GM12878 (cell line): ENCODE measurements at regions of chr6 and their contacts with region 1.

Region 1: DNA sequence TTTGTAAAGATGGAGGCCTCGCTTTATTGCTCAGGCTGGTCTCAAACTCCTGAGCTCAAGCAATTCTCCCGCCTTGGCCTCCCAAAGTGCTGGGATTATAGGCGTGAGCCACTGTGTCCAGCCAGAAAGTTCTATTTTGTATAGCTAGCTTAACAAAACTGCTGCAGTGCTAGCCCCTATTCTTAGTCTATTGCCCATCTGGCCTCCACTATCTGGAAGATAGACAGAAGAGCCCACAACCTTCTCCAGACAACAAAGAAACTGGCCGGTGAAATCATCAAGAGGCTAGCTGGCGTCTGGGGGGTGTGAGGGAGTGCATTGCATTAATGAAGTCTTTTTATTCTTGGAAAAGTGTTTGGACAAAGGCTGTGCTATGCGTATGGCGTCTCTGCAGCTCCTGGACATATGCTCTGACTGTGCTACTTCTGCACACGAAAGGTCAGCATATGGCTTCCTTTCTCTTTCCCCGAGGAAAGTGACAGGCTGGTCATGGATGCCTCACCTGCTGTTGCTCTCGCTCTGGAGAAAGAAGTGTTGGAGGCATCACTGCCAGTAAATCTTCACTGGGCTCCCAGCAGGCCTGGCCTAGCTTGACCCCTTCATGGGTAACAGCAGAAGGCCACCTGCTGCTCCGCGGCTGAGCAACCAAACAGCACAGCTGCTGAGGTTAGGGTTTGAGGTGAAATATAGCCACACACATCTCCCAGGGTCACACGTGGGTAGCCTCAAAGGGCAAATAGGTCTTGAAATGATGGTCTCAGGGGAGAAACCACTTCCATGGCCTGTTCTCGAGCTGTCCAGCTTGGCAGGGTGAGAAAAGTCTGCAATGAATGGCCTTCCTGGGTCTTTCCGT is 95.1 kb upstream of the IYD start:
- DNase-seq: no peak
- ATAC-seq: peak; percentile 86
- H3K4me3 ChIP-seq: no peak overlapping the region
- H3K27ac ChIP-seq: no peak overlapping the region
- H3K4me1 ChIP-seq: no peaks in the 10 kb centered on the region
- H3K27me3 ChIP-seq: no peaks in the 10 kb centered on the region
- CTCF ChIP-seq: no peak
- EP300 ChIP-seq: no peak; a peak in 1 of 4 replicates
- POLR2A ChIP-seq: no peak
- RAD21 ChIP-seq: no peak

Region 2: GRCh38 chr6:150301846-150302519 is 28.3 kb after region 1 on chr6:
- CTCF ChIA-PET with region 1: no interaction called
- POLR2A ChIA-PET with region 1: no interaction called
- RAD21 ChIA-PET with region 1: no interaction called
- SMC1A ChIA-PET with region 1: interaction called, 3 read pairs
- in situ Hi-C with region 1: no loop called
- intact Hi-C with region 1: loop called (anchors 2 kb)
- DNase-seq: no peak
- ATAC-seq: peak; percentile 93
- H3K4me3 ChIP-seq: no peak overlapping the region
- H3K27ac ChIP-seq: no peak overlapping the region
- H3K4me1 ChIP-seq: no peaks in the 10 kb centered on the region
- H3K27me3 ChIP-seq: no peaks in the 10 kb centered on the region; a peak in 1 of 4 replicates
- CTCF ChIP-seq: no peak
- EP300 ChIP-seq: no peak
- POLR2A ChIP-seq: no peak
- RAD21 ChIP-seq: no peak

Region 3: GRCh38 chr6:150452428-150453243 is 179.0 kb after region 1 on chr6:
- CTCF ChIA-PET with region 1: no interaction called
- POLR2A ChIA-PET with region 1: no interaction called
- RAD21 ChIA-PET with region 1: no interaction called
- SMC1A ChIA-PET with region 1: no interaction called
- in situ Hi-C with region 1: no loop called
- intact Hi-C with region 1: no loop called
- DNase-seq: no peak
- ATAC-seq: no peak
- H3K4me3 ChIP-seq: no peak overlapping the region
- H3K27ac ChIP-seq: no peak overlapping the region
- H3K4me1 ChIP-seq: no peaks in the 10 kb centered on the region
- H3K27me3 ChIP-seq: no peaks in the 10 kb centered on the region
- CTCF ChIP-seq: no peak
- EP300 ChIP-seq: no peak
- POLR2A ChIP-seq: no peak
- RAD21 ChIP-seq: no peak